Heart left ventricle (tissue), 16 donors: ENCODE measurements at regions of chr7 and their contacts with region 1.

Region 1: GRCh38 chr7:518630-519483 is 789 bp downstream of the PDGFA start:
- DNase-seq: peak; percentile 88 to 90 (median 89)
- ATAC-seq: peak; percentile 54 to 67 (median 63)
- H3K4me3 ChIP-seq: peak overlapping the region; percentile 62 to 93 (median 80)
- H3K27ac ChIP-seq: peak overlapping the region; percentile 78 to 97 (median 90)
- H3K4me1 ChIP-seq: peaks cover 0 to 89% (median 43%) of the 10 kb centered on the region in 12 donors
- H3K27me3 ChIP-seq: peaks cover 0 to 62% (median 0%) of the 10 kb centered on the region in 9 donors
- CTCF ChIP-seq: peak in 1 of 12 donors; percentile 9
- POLR2A ChIP-seq: peak in 1 of 2 donors; percentile 62

Region 2: DNA sequence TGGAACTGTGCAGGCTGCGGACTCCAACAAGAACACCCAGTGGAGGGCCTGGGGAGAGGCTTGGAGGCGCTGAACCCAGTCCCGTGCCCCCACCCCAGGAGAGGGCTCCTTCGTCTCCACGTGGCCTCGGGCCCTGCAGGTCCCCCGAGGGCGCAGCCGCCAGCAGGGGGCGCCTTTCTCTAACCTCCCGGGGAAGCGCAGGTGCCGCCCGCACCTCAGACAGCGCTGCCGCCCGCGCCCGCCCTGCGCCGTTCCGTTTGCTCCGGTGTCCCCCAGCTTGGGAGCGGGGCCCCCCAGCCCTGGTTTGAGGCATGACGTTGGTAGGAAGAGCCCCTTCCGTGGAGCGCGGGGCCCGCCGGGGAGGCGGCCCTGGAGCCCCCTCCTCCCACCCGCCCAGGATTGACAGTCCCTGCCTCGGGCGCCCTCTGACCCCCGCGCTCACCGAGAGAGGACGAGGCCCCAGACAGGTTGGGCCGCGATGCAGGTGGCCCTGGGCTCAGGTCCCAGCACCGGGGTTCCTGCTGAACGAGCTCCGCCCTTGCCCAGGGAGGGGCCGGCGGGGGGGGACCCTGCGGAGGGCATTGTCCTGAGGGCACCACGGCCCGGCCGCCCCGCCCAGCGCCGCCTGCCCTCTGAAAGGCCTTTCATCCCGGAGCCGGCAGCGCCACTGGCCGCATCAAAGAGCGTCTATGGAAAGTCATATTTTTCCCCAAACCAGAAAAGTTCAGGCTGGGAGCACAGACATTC is 186.0 kb before region 1 on chr7:
- intact Hi-C with region 1: loop called in 9 of 10 experiments (anchors 2 to 10 kb)
- DNase-seq: peak; percentile 76 to 92 (median 81)
- ATAC-seq: peak; percentile 75 to 94 (median 88)
- H3K4me3 ChIP-seq: peak overlapping the region; percentile 5 to 58 (median 50)
- H3K27ac ChIP-seq: peak overlapping the region; percentile 32 to 90 (median 74)
- H3K4me1 ChIP-seq: peaks cover 0 to 16% (median 12%) of the 10 kb centered on the region in 12 donors
- H3K27me3 ChIP-seq: peaks cover 0 to 6% (median 0%) of the 10 kb centered on the region in 9 donors
- CTCF ChIP-seq: peak; percentile 83 to 95 (median 88)
- POLR2A ChIP-seq: no peak

Region 3: DNA sequence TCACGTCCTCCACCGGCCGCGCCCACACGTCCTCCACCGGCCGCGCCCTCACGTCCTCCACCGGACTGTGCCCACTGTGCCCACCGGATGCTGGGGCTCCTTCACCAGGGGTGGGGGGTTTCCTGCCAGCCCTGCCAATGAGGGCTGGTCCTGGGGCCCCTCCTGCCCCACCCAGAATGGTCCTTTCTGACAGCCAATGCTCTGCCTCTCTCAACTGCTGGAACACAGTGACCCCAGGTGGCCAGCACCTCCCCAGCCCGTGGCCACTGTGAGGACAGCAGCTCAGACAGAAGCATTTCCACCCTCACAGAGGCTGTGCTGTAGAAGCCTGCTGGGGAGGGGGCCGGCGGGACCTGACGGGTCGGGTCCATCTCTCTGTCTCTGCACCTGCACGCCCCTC is 117.5 kb after region 1 on chr7:
- intact Hi-C with region 1: loop called in 2 of 10 experiments (anchors 5 to 10 kb)
- DNase-seq: peak in 1 of 5 donors; percentile 46
- ATAC-seq: peak in 3 of 4 donors; percentile 54 to 69 (median 67)
- H3K4me3 ChIP-seq: no peak overlapping the region
- H3K27ac ChIP-seq: no peak overlapping the region
- H3K4me1 ChIP-seq: no peaks in the 10 kb centered on the region
- H3K27me3 ChIP-seq: no peaks in the 10 kb centered on the region
- CTCF ChIP-seq: peak in 11 of 12 donors; percentile 31 to 62 (median 42)
- POLR2A ChIP-seq: no peak

Region 4: DNA sequence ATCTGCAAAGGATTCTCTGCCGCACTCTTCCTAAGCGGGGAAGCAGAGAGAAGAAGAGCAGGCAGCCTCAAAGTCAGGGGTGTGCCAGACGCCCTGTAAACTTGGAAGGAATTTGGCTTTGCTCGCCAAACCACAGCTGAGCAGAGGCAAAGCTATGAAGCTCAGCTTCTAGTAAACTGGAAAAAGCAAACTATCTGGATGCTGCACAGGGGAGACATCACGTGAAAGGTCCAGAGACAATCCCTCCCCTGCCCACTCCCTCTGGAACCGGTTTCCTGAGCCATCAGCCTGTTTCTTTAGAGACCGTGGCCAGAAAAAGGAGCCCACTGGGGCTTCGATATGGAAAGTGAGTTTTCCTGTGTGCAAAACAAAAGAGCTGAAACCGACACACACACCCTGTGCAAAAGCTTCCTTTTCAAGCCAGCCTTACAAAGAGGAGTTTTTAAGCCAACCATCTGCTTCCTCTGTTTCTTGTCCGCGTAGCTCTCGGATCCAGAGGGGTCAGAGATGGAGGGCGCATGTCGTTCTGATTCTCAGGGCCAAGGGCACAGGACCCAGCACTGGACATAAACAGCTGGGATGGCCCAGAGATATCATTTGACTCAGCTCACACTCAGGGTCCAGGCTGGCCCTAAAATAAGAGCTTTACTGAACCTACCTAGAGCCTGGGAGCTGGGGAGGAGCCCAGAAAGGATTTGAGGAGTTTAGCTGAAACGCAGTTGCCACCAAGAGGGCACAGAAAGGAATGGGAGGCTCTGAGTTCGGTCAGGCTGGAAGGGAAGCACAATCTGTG is 149.5 kb after region 1 on chr7:
- intact Hi-C with region 1: loop called in 3 of 10 experiments (anchors 2 to 10 kb)
- DNase-seq: peak in 4 of 5 donors; percentile 35 to 57 (median 52)
- ATAC-seq: peak in 3 of 4 donors; percentile 17 to 38 (median 23)
- H3K4me3 ChIP-seq: peak overlapping the region in 3 of 12 donors; percentile 19 to 30 (median 28)
- H3K27ac ChIP-seq: peak overlapping the region; percentile 12 to 86 (median 58)
- H3K4me1 ChIP-seq: peaks cover 0 to 50% (median 39%) of the 10 kb centered on the region in 12 donors
- H3K27me3 ChIP-seq: no peaks in the 10 kb centered on the region
- CTCF ChIP-seq: no peak
- POLR2A ChIP-seq: no peak

Region 5: DNA sequence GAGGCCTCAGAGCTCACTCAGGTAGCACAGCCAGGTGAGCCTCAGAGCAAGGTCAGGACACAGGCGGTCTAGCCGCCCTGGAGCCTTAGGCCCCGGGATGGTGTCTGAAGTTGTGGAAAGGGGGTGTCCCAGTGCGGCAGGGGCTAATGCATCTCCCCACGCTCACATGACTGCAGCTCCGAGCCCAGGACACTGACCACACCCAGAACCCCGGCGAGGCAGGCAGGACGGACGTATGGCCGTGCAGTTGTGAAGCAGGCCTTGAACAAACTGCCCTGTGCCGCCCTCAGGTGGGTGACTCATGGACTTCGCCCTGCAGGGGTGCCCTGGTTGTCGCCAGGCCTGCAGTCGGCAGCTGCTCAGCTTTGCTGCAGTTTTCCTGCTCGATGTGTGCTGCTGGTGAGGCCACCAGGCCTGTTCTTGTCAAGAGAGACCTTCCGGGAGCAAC is 213.3 kb after region 1 on chr7:
- intact Hi-C with region 1: loop called in 7 of 10 experiments (anchors 5 kb)
- DNase-seq: peak; percentile 48 to 81 (median 75)
- ATAC-seq: peak; percentile 77 to 87 (median 80)
- H3K4me3 ChIP-seq: no peak overlapping the region
- H3K27ac ChIP-seq: peak overlapping the region; percentile 29 to 93 (median 84)
- H3K4me1 ChIP-seq: peaks cover 3 to 41% (median 25%) of the 10 kb centered on the region in 12 donors
- H3K27me3 ChIP-seq: no peaks in the 10 kb centered on the region
- CTCF ChIP-seq: peak in 10 of 12 donors; percentile 22 to 62 (median 46)
- POLR2A ChIP-seq: no peak

Region 6: DNA sequence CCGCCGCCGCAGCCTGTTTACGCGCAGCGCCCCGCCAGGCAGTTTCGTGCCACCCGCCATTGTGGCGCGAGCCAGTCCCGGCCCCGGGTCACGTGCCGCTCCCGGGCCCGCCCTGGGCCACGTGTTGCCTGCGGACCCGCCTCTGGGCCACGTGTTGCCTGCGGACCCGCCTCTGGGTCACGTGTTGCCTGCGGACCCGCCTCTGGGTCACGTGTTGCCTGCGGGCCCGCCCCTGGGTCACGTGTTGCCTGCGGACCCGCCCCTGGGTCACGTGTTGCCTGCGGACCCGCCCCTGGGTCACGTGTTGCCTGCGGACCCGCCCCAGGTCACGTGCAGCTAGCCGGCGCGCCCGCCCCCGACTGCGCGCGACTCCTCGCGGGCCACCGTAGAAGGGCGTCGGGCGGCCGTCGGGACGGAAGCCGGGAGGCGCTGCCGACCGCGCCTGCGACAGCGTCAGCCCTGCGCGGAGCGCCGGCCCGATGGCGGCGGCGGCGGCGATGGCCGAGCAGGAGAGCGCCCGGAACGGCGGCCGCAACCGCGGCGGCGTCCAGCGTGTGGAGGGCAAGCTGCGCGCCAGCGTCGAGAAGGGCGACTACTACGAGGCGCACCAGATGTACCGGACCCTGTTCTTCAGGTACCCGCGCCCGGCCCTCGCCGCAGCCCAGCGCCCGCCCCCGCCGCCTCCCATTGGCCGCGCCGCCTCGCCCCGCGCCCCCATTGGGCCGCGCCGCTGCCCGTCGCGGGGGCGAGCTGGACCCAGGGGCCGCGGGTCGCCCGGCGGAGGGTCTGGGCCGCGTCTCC is 357.5 kb after region 1 on chr7 and contains the start of gene GET4:
- intact Hi-C with region 1: loop called in 2 of 10 experiments (anchors 5 to 10 kb)
- DNase-seq: peak; percentile 96 to 99 (median 98)
- ATAC-seq: peak; percentile 73 to 84 (median 80)
- H3K4me3 ChIP-seq: peak within 1 kb of the TSS; percentile 67 to 98 (median 86)
- H3K27ac ChIP-seq: peak within 1 kb of the TSS; percentile 69 to 95 (median 89)
- H3K4me1 ChIP-seq: peaks cover 10 to 67% (median 45%) of the 10 kb centered on the region in 12 donors
- H3K27me3 ChIP-seq: no peaks in the 10 kb centered on the region
- CTCF ChIP-seq: peak in 9 of 12 donors; percentile 23 to 57 (median 32)
- POLR2A ChIP-seq: peak; percentile 48 to 78
- total RNA-seq, gene GET4: 14.6 to 27.3 (median 18.6) TPM